ENCODE measurements at regions of chr9 and their contacts with region 1.

Region 1: DNA sequence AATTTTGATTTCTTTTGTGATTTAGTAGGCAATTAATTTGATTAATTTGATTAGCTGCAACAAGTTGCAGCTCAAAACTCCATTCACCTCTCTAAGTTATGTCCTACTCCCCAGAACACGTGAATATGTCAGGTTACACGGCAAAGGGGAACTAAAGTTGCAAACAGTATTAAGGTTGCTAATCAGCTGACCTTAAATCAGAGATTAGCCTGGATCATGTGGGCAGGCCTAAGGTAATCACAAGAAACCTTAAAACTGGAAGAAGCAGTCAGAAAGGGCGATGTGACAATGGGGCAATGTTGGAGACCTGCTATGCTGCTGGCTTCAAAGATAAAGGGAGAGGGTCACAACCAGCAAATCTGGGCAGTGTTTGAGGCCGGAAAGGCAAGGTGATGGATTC is 47.3 kb upstream of the ANXA1 start:
- DNase-seq: no peak
- H3K4me3 ChIP-seq: no peak overlapping the region
- H3K27ac ChIP-seq: no peak overlapping the region
- H3K27me3 ChIP-seq: no peaks in the 10 kb centered on the region
- CTCF ChIP-seq: no peak

Region 2: DNA sequence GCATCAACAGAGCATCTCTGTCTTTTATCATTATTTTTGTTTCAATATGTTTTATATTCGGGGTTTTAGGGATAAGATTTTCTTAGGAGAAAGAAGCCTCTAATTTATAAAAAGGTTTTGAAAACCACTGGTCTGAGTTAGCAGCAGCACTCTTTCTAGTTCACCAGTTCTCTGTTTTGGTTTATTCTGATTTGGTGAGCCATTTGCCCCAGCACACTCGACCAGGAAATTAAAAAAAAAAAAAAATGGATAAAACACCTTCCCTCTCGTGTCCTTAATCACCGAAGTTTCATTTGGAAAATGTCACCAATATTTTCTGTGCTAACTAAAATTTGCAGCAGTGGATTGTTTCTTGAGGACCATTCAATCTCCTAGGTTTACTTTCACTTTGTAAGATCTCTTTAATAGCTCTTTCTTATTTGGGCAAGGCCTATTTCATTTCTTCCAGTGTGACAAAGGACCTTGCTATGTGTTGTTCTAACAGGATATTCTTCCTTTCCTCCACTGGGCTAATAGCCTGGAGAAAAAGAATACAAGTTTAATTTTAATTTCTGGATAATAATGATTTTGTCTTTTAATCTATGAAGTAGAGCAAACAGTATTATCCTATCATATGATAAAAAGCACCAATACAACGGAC is 10.5 kb before region 1 on chr9:
- CTCF ChIA-PET with region 1: interaction called, 18 read pairs
- POLR2A ChIA-PET with region 1: no interaction called
- DNase-seq: no peak
- H3K4me3 ChIP-seq: no peak overlapping the region
- H3K27ac ChIP-seq: no peak overlapping the region
- H3K27me3 ChIP-seq: no peaks in the 10 kb centered on the region
- CTCF ChIP-seq: no peak

Region 3: GRCh38 chr9:73116031-73116430 is 11.7 kb after region 1 on chr9:
- CTCF ChIA-PET with region 1: interaction called, 43 read pairs
- POLR2A ChIA-PET with region 1: no interaction called
- DNase-seq: peak; percentile 7
- H3K4me3 ChIP-seq: no peak overlapping the region
- H3K27ac ChIP-seq: no peak overlapping the region
- H3K27me3 ChIP-seq: no peaks in the 10 kb centered on the region
- CTCF ChIP-seq: no peak

Region 4: GRCh38 chr9:73132034-73132776 is 27.9 kb after region 1 on chr9:
- CTCF ChIA-PET with region 1: interaction called, 13 read pairs
- POLR2A ChIA-PET with region 1: no interaction called
- DNase-seq: no peak
- H3K4me3 ChIP-seq: peak overlapping the region; percentile 60
- H3K27ac ChIP-seq: peak overlapping the region; percentile 86
- H3K27me3 ChIP-seq: no peaks in the 10 kb centered on the region
- CTCF ChIP-seq: no peak

Region 5: DNA sequence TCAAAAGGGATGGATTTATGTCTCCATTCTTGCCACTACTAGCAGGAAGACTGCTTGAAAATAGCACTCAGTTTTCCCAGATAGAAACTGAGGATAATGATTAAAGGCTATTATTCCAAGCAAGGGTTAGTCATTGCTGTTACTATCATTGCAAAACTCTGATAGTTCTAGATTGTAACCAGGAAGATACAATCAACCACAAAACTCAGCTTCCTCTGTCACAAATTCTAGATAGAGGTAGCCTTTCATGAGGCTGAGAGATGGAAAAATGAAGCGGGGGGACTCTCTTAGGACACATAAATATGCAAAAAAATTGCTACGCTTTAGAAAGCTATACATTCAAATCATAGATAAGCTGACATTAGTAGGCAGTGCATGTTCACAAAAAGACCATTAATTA is 50.4 kb after region 1 on chr9:
- CTCF ChIA-PET with region 1: interaction called, 19 read pairs
- POLR2A ChIA-PET with region 1: no interaction called
- DNase-seq: no peak
- H3K4me3 ChIP-seq: peak overlapping the region; percentile 72; the same call in 1 of the 2 replicates
- H3K27ac ChIP-seq: no peak overlapping the region
- H3K27me3 ChIP-seq: no peaks in the 10 kb centered on the region
- CTCF ChIP-seq: no peak

Region 6: GRCh38 chr9:73173557-73174329 is 69.4 kb after region 1 on chr9:
- CTCF ChIA-PET with region 1: interaction called, 228 read pairs
- POLR2A ChIA-PET with region 1: no interaction called
- DNase-seq: no peak
- H3K4me3 ChIP-seq: no peak overlapping the region
- H3K27ac ChIP-seq: no peak overlapping the region
- H3K27me3 ChIP-seq: no peaks in the 10 kb centered on the region
- CTCF ChIP-seq: no peak

Region 7: GRCh38 chr9:73183917-73184861 is 79.8 kb after region 1 on chr9:
- CTCF ChIA-PET with region 1: interaction called, 228 read pairs
- POLR2A ChIA-PET with region 1: no interaction called
- DNase-seq: peak; percentile 8
- H3K4me3 ChIP-seq: no peak overlapping the region
- H3K27ac ChIP-seq: no peak overlapping the region
- H3K27me3 ChIP-seq: no peaks in the 10 kb centered on the region
- CTCF ChIP-seq: peak; percentile 44